Sciatic nerve (tissue), 2 donors: ENCODE measurements at regions of chr20 and their contacts with region 1.

Region 1: DNA sequence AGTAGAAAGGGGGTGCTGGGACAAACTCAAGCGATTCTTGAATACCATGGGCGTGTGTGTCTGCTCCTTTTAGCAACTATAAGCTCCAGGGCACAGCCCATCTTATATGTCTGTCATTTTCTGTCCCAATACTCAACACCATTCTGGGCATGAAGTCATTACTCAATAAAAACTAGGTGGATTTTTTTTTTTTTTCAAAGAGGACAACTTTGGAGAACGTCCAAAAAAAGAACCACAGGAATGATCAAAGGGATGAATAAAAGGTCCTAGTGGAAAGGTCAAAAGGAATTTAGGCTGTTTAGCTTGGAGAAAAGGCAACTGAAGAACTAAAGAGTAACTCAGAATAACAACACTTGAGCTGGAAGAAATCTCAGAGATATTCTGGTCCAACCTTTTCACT is 24.4 kb downstream of the UQCC1 start:
- DNase-seq: no peak
- ATAC-seq: peak; percentile 72

Region 2: GRCh38 chr20:35410613-35411012 is 23.3 kb after region 1 on chr20:
- intact Hi-C with region 1: loop called (anchors 1 kb)
- DNase-seq: no peak
- ATAC-seq: no peak